T-cell (primary cell): ENCODE measurements at regions of chr4 and their contacts with region 1.

Region 1: GRCh38 chr4:74715706-74716435 is 78.5 kb downstream of the BTC start:
- DNase-seq: no peak
- ATAC-seq: no peak
- H3K4me3 ChIP-seq: no peak overlapping the region
- H3K4me3 Mint-ChIP-seq: no peak overlapping the region
- H3K27ac ChIP-seq: no peak overlapping the region
- H3K27ac Mint-ChIP-seq: no peak overlapping the region
- H3K4me1 ChIP-seq: no peaks in the 10 kb centered on the region
- H3K4me1 Mint-ChIP-seq: no peaks in the 10 kb centered on the region
- H3K27me3 ChIP-seq: peaks cover 0 to 10% of the 10 kb centered on the region in 2 experiments
- H3K27me3 Mint-ChIP-seq: peaks cover 3 to 7% of the 10 kb centered on the region in 2 donors

Region 2: GRCh38 chr4:73527196-73527595 is 1188.7 kb before region 1 on chr4:
- CTCF ChIA-PET with region 1: no interaction called
- POLR2A ChIA-PET with region 1: no interaction called
- DNase-seq: no peak
- ATAC-seq: no peak
- H3K4me3 ChIP-seq: no peak overlapping the region
- H3K4me3 Mint-ChIP-seq: no peak overlapping the region
- H3K27ac ChIP-seq: no peak overlapping the region
- H3K27ac Mint-ChIP-seq: no peak overlapping the region
- H3K4me1 ChIP-seq: no peaks in the 10 kb centered on the region
- H3K4me1 Mint-ChIP-seq: no peaks in the 10 kb centered on the region
- H3K27me3 ChIP-seq: no peaks in the 10 kb centered on the region
- H3K27me3 Mint-ChIP-seq: no peaks in the 10 kb centered on the region

Region 3: GRCh38 chr4:74117024-74117534 is 598.8 kb before region 1 on chr4:
- CTCF ChIA-PET with region 1: no interaction called
- POLR2A ChIA-PET with region 1: interaction called in 1 of 2 experiments, 10 read pairs
- DNase-seq: no peak
- ATAC-seq: no peak
- H3K4me3 ChIP-seq: no peak overlapping the region
- H3K4me3 Mint-ChIP-seq: no peak overlapping the region
- H3K27ac ChIP-seq: no peak overlapping the region
- H3K27ac Mint-ChIP-seq: no peak overlapping the region
- H3K4me1 ChIP-seq: no peaks in the 10 kb centered on the region
- H3K4me1 Mint-ChIP-seq: no peaks in the 10 kb centered on the region
- H3K27me3 ChIP-seq: no peaks in the 10 kb centered on the region
- H3K27me3 Mint-ChIP-seq: peaks cover 3 to 5% of the 10 kb centered on the region in 2 donors

Region 4: GRCh38 chr4:74845834-74846233 is 130.0 kb after region 1 on chr4:
- CTCF ChIA-PET with region 1: no interaction called
- POLR2A ChIA-PET with region 1: no interaction called
- DNase-seq: no peak
- ATAC-seq: no peak
- H3K4me3 ChIP-seq: no peak overlapping the region
- H3K4me3 Mint-ChIP-seq: no peak overlapping the region
- H3K27ac ChIP-seq: no peak overlapping the region
- H3K27ac Mint-ChIP-seq: no peak overlapping the region
- H3K4me1 ChIP-seq: no peaks in the 10 kb centered on the region
- H3K4me1 Mint-ChIP-seq: no peaks in the 10 kb centered on the region
- H3K27me3 ChIP-seq: no peaks in the 10 kb centered on the region
- H3K27me3 Mint-ChIP-seq: peaks cover 0 to 14% of the 10 kb centered on the region in 2 donors